Activated T-helper 1 cell treated with anti-CD3 and anti-CD28 coated beads, Interleukin-12 subunit alpha, Interleukin-12 subunit beta, Interleukin-2, Interleukin-4 antibody, amounts not matched to agents 30 ng/mL and 10 ng/mL and 1 ng/mL, durations not matched to agents 14 hours and 24 hours and 36 hours (primary cell): ENCODE measurements at regions of chr16 and their contacts with region 1.

Region 1: GRCh38 chr16:69386596-69386995 is 789 bp upstream of the TERF2 start:
- DNase-seq: no peak
- H3K4me3 Mint-ChIP-seq: peak overlapping the region; percentile 92
- H3K27ac Mint-ChIP-seq: no peak overlapping the region
- H3K4me1 Mint-ChIP-seq: peaks cover 26% of the 10 kb centered on the region
- H3K27me3 Mint-ChIP-seq: no peaks in the 10 kb centered on the region

Region 2: GRCh38 chr16:69330286-69331109 is 56.1 kb before region 1 on chr16 and contains the start of gene PDF:
- intact Hi-C with region 1: loop called (anchors 2 kb)
- DNase-seq: peak; percentile 86
- H3K4me3 Mint-ChIP-seq: peak within 1 kb of the TSS; percentile 84
- H3K27ac Mint-ChIP-seq: peak within 1 kb of the TSS; percentile 63
- H3K4me1 Mint-ChIP-seq: peaks cover 36% of the 10 kb centered on the region
- H3K27me3 Mint-ChIP-seq: no peaks in the 10 kb centered on the region
- total RNA-seq, gene PDF: 17.4 and 21.5 TPM in 2 replicates

Region 3: DNA sequence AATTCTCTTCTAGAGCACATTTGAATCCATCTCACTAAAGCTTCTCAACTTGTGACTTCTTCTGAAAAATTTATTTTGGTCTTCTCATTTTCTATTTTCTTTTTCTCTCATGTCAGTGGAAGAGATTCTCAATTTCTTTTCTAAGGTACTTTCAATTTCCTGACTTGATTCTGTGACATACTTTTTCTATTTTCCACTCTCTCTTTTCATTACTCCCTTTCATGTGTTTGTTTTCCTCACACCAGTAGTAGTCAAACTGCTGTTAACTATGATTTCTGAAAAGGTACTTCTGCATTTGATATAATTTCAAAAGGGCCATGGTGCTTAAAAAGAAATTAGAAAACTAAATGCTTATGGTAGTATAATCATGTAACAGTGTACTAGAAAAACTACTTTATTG is 221.1 kb after region 1 on chr16:
- intact Hi-C with region 1: loop called (anchors 1 kb)
- DNase-seq: no peak
- H3K4me3 Mint-ChIP-seq: peak overlapping the region; percentile 20
- H3K27ac Mint-ChIP-seq: peak overlapping the region; percentile 85
- H3K4me1 Mint-ChIP-seq: peaks cover 28% of the 10 kb centered on the region
- H3K27me3 Mint-ChIP-seq: no peaks in the 10 kb centered on the region